Lower lobe of right lung (tissue), 2 donors: ENCODE measurements at regions of chr16 and their contacts with region 1.

Region 1: GRCh38 chr16:88442727-88443576 is 10.1 kb upstream of the ZFPM1 start:
- DNase-seq: peak; percentile 83
- ATAC-seq: peak; percentile 88 to 93
- H3K4me3 ChIP-seq: peak overlapping the region; percentile 1
- H3K27ac ChIP-seq: no peak overlapping the region
- H3K4me1 ChIP-seq: peaks cover 8% of the 10 kb centered on the region
- H3K27me3 ChIP-seq: peaks cover 31% of the 10 kb centered on the region
- CTCF ChIP-seq: peak; percentile 98

Region 2: GRCh38 chr16:88527186-88527936 is 84.4 kb after region 1 on chr16:
- intact Hi-C with region 1: loop called (anchors 5 kb)
- DNase-seq: peak; percentile 71
- ATAC-seq: peak; percentile 77 to 81
- H3K4me3 ChIP-seq: no peak overlapping the region
- H3K27ac ChIP-seq: no peak overlapping the region
- H3K4me1 ChIP-seq: peaks cover 21% of the 10 kb centered on the region
- H3K27me3 ChIP-seq: peaks cover 7% of the 10 kb centered on the region
- CTCF ChIP-seq: peak; percentile 95